ENCODE measurements at regions of chr3 and their contacts with region 1.

Region 1: DNA sequence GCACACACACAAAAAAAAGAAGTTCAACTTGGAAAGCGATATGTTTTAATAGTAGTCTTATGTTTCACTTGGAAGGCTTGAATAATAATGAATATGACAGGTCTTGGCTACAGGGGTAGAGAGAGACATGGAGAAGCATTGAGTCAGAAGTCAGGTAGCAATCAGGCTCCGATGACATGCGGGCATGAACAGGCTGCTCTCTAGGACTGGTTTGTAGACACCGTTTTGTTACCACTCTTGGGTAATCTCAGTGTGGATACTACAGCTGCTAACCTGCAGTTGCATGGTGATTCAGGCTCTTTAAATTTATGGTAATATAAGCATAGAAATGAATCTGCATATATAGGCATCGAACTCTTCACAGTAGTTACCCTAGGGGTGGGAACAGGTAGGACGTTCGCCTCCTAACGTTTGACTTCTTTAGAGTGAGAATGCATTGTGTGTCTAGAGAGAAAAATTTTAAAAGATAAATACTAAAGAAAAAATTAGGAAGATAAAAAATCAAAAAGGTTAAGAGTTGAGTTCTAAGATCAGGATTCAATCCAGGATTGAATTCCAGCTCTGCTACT is 241.6 kb upstream of the KBTBD8 start:
- DNase-seq: no peak
- H3K4me3 ChIP-seq: no peak overlapping the region
- H3K27ac ChIP-seq: no peak overlapping the region
- H3K4me1 ChIP-seq: peaks cover 0 to 21% (median 10%) of the 10 kb centered on the region in 4 donors
- H3K27me3 ChIP-seq: no peaks in the 10 kb centered on the region
- CTCF ChIP-seq: no peak
- EP300 ChIP-seq: no peak
- POLR2A ChIP-seq: no peak

Region 2: GRCh38 chr3:66789580-66790237 is 33.2 kb after region 1 on chr3:
- intact Hi-C with region 1: loop called (anchors 5 kb)
- DNase-seq: no peak
- H3K4me3 ChIP-seq: no peak overlapping the region
- H3K27ac ChIP-seq: no peak overlapping the region
- H3K4me1 ChIP-seq: no peaks in the 10 kb centered on the region
- H3K27me3 ChIP-seq: no peaks in the 10 kb centered on the region
- CTCF ChIP-seq: no peak
- EP300 ChIP-seq: no peak
- POLR2A ChIP-seq: no peak